Stomach (tissue), 19 donors: ENCODE measurements at regions of chr1 and their contacts with region 1.

Region 1: GRCh38 chr1:17502326-17502778 is 37.1 kb upstream of the ARHGEF10L start:
- DNase-seq: peak; percentile 88 to 92
- H3K4me3 ChIP-seq: no peak overlapping the region
- H3K27ac ChIP-seq: peak overlapping the region in 2 of 5 donors; percentile 4 to 58
- H3K4me1 ChIP-seq: peaks cover 6 to 12% (median 10%) of the 10 kb centered on the region in 4 donors
- H3K27me3 ChIP-seq: no peaks in the 10 kb centered on the region
- CTCF ChIP-seq: peak in 5 of 7 experiments; percentile 75 to 91 (median 85)
- EP300 ChIP-seq: no peak
- POLR2A ChIP-seq: no peak

Region 2: DNA sequence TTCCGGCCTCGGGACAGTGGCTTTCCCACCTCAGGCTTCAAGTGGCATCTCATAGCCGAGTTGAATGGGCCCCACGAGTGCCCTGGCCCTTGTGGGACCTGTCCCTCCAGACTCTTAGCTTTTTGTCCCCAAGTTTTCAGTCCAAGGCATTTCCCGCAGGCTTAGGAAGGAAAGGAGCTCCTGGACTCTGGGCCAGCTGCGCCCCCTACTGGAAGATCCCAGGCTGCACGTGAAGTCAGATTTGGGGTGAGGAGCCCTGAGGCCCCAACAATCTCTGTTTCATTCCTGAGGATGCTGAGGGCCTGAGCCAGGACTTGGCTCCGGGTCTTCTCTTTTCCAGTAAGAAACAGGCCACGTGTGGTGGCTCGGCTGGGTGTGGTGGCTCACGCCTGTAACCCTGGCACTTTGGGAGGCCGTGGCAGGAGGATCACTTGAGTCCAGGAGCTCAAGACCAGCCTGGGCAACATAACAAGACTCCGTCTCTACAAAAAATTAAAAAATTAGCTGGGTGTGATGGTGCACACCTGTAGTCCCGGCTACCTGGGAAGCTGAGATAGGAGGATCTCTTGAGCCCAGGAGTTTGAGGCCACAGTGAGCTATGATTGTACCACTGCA is 104.6 kb after region 1 on chr1:
- intact Hi-C with region 1: loop called (anchors 5 kb)
- DNase-seq: peak; percentile 80 to 87
- H3K4me3 ChIP-seq: no peak overlapping the region
- H3K27ac ChIP-seq: peak overlapping the region in 3 of 5 donors; percentile 55 to 80 (median 73)
- H3K4me1 ChIP-seq: peaks cover 13 to 39% (median 23%) of the 10 kb centered on the region in 4 donors
- H3K27me3 ChIP-seq: no peaks in the 10 kb centered on the region
- CTCF ChIP-seq: peak in 6 of 7 experiments; percentile 70 to 92 (median 88)
- EP300 ChIP-seq: no peak
- POLR2A ChIP-seq: no peak